ENCODE measurements at regions of chr9 and their contacts with region 1.

Region 1: GRCh38 chr9:112443200-112443599 is 43.4 kb upstream of the KIAA1958 start:
- DNase-seq: peak in 6 of 9 donors; percentile 16 to 37 (median 28)
- ATAC-seq: no peak
- H3K4me3 ChIP-seq: no peak overlapping the region
- H3K4me3 Mint-ChIP-seq: no peak overlapping the region
- H3K27ac ChIP-seq: no peak overlapping the region
- H3K27ac Mint-ChIP-seq: peak overlapping the region in 1 of 9 donors; percentile 10
- H3K4me1 ChIP-seq: no peaks in the 10 kb centered on the region
- H3K4me1 Mint-ChIP-seq: peaks cover 0 to 10% (median 0%) of the 10 kb centered on the region in 7 donors
- H3K27me3 ChIP-seq: no peaks in the 10 kb centered on the region
- H3K27me3 Mint-ChIP-seq: no peaks in the 10 kb centered on the region

Region 2: GRCh38 chr9:110599164-110599867 is 1843.9 kb before region 1 on chr9:
- CTCF ChIA-PET with region 1: no interaction called
- POLR2A ChIA-PET with region 1: no interaction called
- intact Hi-C with region 1: no loop called
- DNase-seq: no peak
- ATAC-seq: no peak
- H3K4me3 ChIP-seq: no peak overlapping the region
- H3K4me3 Mint-ChIP-seq: no peak overlapping the region
- H3K27ac ChIP-seq: no peak overlapping the region
- H3K27ac Mint-ChIP-seq: no peak overlapping the region
- H3K4me1 ChIP-seq: no peaks in the 10 kb centered on the region
- H3K4me1 Mint-ChIP-seq: no peaks in the 10 kb centered on the region
- H3K27me3 ChIP-seq: no peaks in the 10 kb centered on the region
- H3K27me3 Mint-ChIP-seq: peaks cover 0 to 21% (median 9%) of the 10 kb centered on the region in 5 donors

Region 3: DNA sequence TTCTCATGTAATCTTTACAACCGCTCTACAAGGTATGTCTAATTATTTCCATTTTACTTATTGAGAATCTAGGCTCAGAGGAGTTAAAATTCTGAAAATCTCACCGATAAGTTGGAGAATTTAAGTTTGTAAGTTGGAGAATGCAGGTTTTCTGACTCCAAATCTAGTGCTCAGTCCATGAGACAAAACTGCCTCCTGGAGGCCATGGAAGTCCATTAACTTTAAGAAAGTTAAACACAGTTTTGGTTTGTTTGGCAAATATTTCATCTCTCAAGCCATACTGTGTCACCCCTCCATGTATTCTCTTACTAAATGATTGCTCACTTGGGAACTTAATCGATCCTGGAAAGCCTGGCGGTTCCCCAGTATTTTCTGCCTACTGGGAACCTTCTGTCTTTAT is 222.1 kb after region 1 on chr9:
- CTCF ChIA-PET with region 1: interaction called, 5 read pairs
- POLR2A ChIA-PET with region 1: no interaction called
- intact Hi-C with region 1: loop called in 1 of 2 experiments (anchors 1 kb)
- DNase-seq: no peak
- ATAC-seq: no peak
- H3K4me3 ChIP-seq: no peak overlapping the region
- H3K4me3 Mint-ChIP-seq: no peak overlapping the region
- H3K27ac ChIP-seq: no peak overlapping the region
- H3K27ac Mint-ChIP-seq: no peak overlapping the region
- H3K4me1 ChIP-seq: no peaks in the 10 kb centered on the region
- H3K4me1 Mint-ChIP-seq: no peaks in the 10 kb centered on the region
- H3K27me3 ChIP-seq: no peaks in the 10 kb centered on the region
- H3K27me3 Mint-ChIP-seq: no peaks in the 10 kb centered on the region

Region 4: DNA sequence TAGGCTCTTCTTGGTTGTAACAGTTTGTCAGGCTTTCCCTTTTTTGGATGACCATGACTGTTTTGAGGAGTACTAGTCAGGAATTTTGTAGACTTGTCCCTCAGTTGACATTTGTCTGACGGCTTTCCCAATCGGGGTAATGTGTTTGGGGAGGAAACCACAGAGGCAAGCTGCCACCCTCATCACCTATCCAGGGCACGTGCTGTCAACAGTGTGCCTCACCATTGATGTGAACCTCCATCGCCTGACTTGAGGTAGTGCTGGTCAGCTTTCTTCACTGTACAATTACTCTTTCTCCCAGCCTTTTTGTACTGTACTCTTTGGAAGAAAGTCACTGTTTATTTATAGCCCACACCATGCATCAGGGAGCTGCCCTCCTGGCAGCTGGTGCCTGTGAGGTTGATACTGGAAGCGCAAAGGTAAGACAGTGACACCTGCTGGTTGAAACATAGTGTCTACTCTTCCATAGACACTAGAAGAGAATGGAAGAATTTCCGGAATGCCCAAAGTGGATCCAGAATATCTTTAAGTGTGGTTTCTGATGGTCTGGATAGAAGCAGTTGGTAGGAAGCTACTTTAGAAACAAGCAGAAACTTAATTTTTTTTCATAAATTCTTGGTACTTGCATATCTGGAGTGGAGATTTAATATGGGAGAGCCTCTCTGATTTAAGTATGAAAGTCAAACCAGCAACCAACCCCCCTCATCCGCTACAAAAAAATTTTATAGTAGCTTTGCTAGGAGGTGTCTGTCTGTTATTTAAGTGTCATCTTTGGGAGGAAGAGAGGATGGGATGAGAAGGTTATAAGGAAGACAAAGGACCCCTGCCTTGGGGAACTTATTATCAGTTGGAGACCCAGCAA is 376.7 kb after region 1 on chr9:
- CTCF ChIA-PET with region 1: interaction called, 3 read pairs
- POLR2A ChIA-PET with region 1: no interaction called
- intact Hi-C with region 1: loop called (anchors 1 kb)
- DNase-seq: peak in 3 of 9 donors; percentile 4 to 15 (median 6)
- ATAC-seq: no peak
- H3K4me3 ChIP-seq: no peak overlapping the region
- H3K4me3 Mint-ChIP-seq: no peak overlapping the region
- H3K27ac ChIP-seq: no peak overlapping the region
- H3K27ac Mint-ChIP-seq: peak overlapping the region in 1 of 9 donors; percentile 41
- H3K4me1 ChIP-seq: no peaks in the 10 kb centered on the region
- H3K4me1 Mint-ChIP-seq: peaks cover 0 to 6% (median 0%) of the 10 kb centered on the region in 7 donors
- H3K27me3 ChIP-seq: no peaks in the 10 kb centered on the region
- H3K27me3 Mint-ChIP-seq: no peaks in the 10 kb centered on the region